Calu3 (cell line): ENCODE measurements at regions of chr11 and their contacts with region 1.

Region 1: GRCh38 chr11:8099291-8099899 is 18.4 kb downstream of the TUB start:
- DNase-seq: peak; percentile 81
- H3K4me3 Mint-ChIP-seq: no peak overlapping the region
- H3K27ac Mint-ChIP-seq: no peak overlapping the region
- H3K4me1 Mint-ChIP-seq: no peaks in the 10 kb centered on the region
- H3K27me3 Mint-ChIP-seq: peaks cover 13% of the 10 kb centered on the region
- CTCF ChIP-seq: peak; percentile 62

Region 2: GRCh38 chr11:7605186-7605943 is 494.0 kb before region 1 on chr11:
- CTCF ChIA-PET with region 1: no interaction called
- intact Hi-C with region 1: no loop called
- DNase-seq: peak; percentile 47
- H3K4me3 Mint-ChIP-seq: no peak overlapping the region
- H3K27ac Mint-ChIP-seq: no peak overlapping the region
- H3K4me1 Mint-ChIP-seq: peaks cover 26% of the 10 kb centered on the region
- H3K27me3 Mint-ChIP-seq: no peaks in the 10 kb centered on the region
- CTCF ChIP-seq: no peak

Region 3: GRCh38 chr11:7672960-7673723 is 426.3 kb before region 1 on chr11 and contains the start of gene CYB5R2:
- CTCF ChIA-PET with region 1: no interaction called
- intact Hi-C with region 1: loop called (anchors 10 kb)
- DNase-seq: peak; percentile 77
- H3K4me3 Mint-ChIP-seq: peak within 1 kb of the TSS; percentile 81
- H3K27ac Mint-ChIP-seq: peak within 1 kb of the TSS; percentile 71
- H3K4me1 Mint-ChIP-seq: peaks cover 68% of the 10 kb centered on the region
- H3K27me3 Mint-ChIP-seq: no peaks in the 10 kb centered on the region
- CTCF ChIP-seq: no peak
- total RNA-seq, gene CYB5R2: 15.3 and 23.0 TPM in 2 replicates

Region 4: GRCh38 chr11:7986768-7987559 is 112.4 kb before region 1 on chr11 and contains the start of gene EIF3F:
- CTCF ChIA-PET with region 1: interaction called, 15 read pairs
- intact Hi-C with region 1: no loop called
- DNase-seq: peak; percentile 87
- H3K4me3 Mint-ChIP-seq: peak within 1 kb of the TSS; percentile 99
- H3K27ac Mint-ChIP-seq: peak within 1 kb of the TSS; percentile 100
- H3K4me1 Mint-ChIP-seq: peaks cover 34% of the 10 kb centered on the region
- H3K27me3 Mint-ChIP-seq: no peaks in the 10 kb centered on the region
- CTCF ChIP-seq: peak; percentile 93
- total RNA-seq, gene EIF3F: 178 and 197 TPM in 2 replicates

Region 5: DNA sequence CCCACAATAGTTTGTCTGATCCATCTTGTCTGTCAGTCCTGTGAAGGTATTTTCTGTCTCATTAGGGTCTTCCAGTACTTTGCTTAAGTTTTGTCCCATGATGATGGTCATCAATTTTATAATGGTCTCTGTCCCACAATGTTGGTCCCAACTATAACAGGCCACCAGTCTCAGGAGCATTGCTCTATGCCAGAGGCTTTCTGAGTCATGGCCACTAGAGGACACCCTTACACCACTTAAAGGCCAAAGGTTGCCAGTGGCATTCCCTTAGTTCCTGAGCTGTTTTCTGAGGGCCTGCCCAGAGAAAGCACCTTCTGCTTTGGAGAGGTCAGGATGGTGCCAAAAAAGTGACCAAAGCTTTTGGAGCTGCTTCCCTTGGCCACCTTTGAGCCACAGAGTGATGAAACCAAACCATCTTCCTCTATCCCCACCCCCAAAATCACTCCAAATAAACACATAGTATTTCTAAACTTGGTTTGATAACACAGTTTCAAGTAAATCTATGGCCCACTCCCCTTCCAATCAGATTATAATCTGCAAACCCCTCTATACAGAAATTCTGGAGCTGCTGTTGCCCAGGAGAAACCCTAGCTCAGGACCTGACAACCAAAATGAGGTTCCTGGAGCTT is 92.9 kb before region 1 on chr11:
- CTCF ChIA-PET with region 1: interaction called, 97 read pairs
- intact Hi-C with region 1: loop called (anchors 1 kb)
- DNase-seq: peak; percentile 71
- H3K4me3 Mint-ChIP-seq: no peak overlapping the region
- H3K27ac Mint-ChIP-seq: no peak overlapping the region
- H3K4me1 Mint-ChIP-seq: no peaks in the 10 kb centered on the region
- H3K27me3 Mint-ChIP-seq: peaks cover 10% of the 10 kb centered on the region
- CTCF ChIP-seq: peak; percentile 59

Region 6: DNA sequence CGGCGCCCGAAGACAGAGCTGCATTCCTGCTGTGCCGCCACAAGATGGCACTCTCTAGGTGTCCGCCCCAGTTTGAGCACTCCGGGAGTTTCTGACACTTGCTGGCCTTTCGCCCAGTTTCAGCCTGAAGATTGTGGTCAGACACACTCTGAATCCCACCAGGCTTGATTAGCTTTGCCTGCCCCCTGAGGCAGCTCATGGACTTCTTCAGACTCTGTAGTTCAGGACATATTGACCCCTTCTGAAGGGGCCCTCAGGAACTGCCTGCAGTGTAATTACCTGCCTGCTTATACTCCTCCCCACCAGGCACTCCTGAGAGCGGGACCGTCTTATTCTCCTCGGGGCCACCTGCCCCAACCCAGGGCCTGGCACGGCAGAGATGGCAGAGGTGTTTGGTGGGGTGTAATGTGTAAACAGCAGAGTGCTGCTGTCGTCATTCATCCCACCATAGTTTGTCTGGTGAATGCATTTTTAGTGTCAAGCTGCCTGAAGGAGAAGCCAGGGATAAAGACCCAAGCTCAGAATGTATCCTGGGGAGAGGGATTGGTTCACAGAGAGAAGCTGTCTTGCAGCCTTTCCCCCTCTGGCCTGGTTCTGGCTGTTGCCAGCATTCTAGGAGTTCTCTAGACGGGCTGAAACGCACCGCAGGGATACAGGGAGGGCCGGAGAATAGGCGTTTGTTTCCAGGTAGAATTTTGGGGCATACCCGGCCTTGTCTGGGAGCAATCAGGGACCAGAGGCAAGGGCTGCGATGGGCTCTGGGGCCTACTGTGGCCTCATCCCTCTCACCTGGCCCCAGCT is 65.9 kb before region 1 on chr11:
- CTCF ChIA-PET with region 1: interaction called, 59 read pairs
- intact Hi-C with region 1: loop called (anchors 1 kb)
- DNase-seq: peak; percentile 75
- H3K4me3 Mint-ChIP-seq: no peak overlapping the region
- H3K27ac Mint-ChIP-seq: no peak overlapping the region
- H3K4me1 Mint-ChIP-seq: peaks cover 9% of the 10 kb centered on the region
- H3K27me3 Mint-ChIP-seq: peaks cover 85% of the 10 kb centered on the region
- CTCF ChIP-seq: peak; percentile 89

Region 7: GRCh38 chr11:8283465-8284230 is 184.3 kb after region 1 on chr11:
- CTCF ChIA-PET with region 1: no interaction called
- intact Hi-C with region 1: no loop called
- DNase-seq: no peak
- H3K4me3 Mint-ChIP-seq: no peak overlapping the region
- H3K27ac Mint-ChIP-seq: no peak overlapping the region
- H3K4me1 Mint-ChIP-seq: no peaks in the 10 kb centered on the region
- H3K27me3 Mint-ChIP-seq: peaks cover 39% of the 10 kb centered on the region
- CTCF ChIP-seq: no peak